IMR-90 (cell line): ENCODE measurements at regions of chr3 and their contacts with region 1.

Region 1: GRCh38 chr3:196739671-196740480 is at the start of gene PAK2:
- DNase-seq: peak; percentile 79
- ATAC-seq: peak; percentile 96
- H3K4me3 ChIP-seq: peak within 1 kb of the TSS; percentile 86
- H3K27ac ChIP-seq: peak within 1 kb of the TSS; percentile 91
- H3K4me1 ChIP-seq: peaks cover 1% of the 10 kb centered on the region; the same call in 1 of the 2 replicates
- H3K27me3 ChIP-seq: no peaks in the 10 kb centered on the region
- CTCF ChIP-seq: no peak
- POLR2A ChIP-seq: peak; percentile 73
- RAD21 ChIP-seq: no peak
- total RNA-seq, gene PAK2: 33.9 and 36.0 TPM in 2 replicates

Region 2: DNA sequence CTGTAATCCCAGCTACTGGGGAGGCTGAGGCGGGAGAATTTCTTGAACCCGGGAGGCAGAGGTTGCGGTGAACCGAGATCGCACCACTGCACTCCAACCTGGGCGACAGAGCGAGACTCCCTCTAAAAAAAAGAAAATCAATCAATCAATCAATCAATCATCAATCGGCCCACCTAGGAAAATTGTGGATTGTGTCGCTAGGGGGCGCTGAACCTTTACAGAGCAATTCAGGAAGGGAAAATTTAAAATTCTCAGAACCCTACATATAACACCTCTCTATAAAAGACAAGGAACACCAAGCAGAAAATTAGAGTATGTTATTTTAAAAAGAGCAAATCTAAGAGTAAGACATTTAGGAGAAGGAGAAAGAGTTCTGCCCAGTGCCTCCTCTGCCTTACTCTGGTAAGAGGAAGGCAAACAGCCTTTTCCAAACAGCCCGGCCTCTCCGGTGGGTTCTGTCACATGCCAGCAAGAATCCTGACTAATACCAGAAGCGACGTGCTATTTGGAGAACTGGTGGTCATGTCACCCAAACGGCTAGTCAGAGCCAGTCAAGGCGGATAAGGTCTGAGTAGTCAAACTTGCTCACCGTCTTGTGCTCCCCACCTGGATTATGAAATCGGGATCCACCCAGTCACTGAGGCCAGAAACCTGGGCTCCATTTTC is 202.4 kb before region 1 on chr3:
- CTCF ChIA-PET with region 1: no interaction called
- POLR2A ChIA-PET with region 1: no interaction called
- dilution Hi-C with region 1: no loop called
- in situ Hi-C with region 1: no loop called
- intact Hi-C with region 1: no loop called
- DNase-seq: peak; percentile 13
- ATAC-seq: no peak
- H3K4me3 ChIP-seq: no peak overlapping the region
- H3K27ac ChIP-seq: no peak overlapping the region
- H3K4me1 ChIP-seq: no peaks in the 10 kb centered on the region
- H3K27me3 ChIP-seq: no peaks in the 10 kb centered on the region; the same call in 1 of the 2 replicates
- CTCF ChIP-seq: peak; percentile 55
- POLR2A ChIP-seq: no peak
- RAD21 ChIP-seq: peak; percentile 35

Region 3: GRCh38 chr3:196650740-196651311 is 89.0 kb before region 1 on chr3:
- CTCF ChIA-PET with region 1: no interaction called
- POLR2A ChIA-PET with region 1: no interaction called
- dilution Hi-C with region 1: no loop called
- in situ Hi-C with region 1: no loop called
- intact Hi-C with region 1: no loop called
- DNase-seq: peak; percentile 98
- ATAC-seq: peak; percentile 99
- H3K4me3 ChIP-seq: no peak overlapping the region
- H3K27ac ChIP-seq: no peak overlapping the region
- H3K4me1 ChIP-seq: peaks cover 2% of the 10 kb centered on the region
- H3K27me3 ChIP-seq: peaks cover 4% of the 10 kb centered on the region; the same call in 1 of the 2 replicates
- CTCF ChIP-seq: no peak
- POLR2A ChIP-seq: no peak
- RAD21 ChIP-seq: no peak

Region 4: GRCh38 chr3:196774191-196774820 is 34.4 kb after region 1 on chr3:
- CTCF ChIA-PET with region 1: no interaction called
- POLR2A ChIA-PET with region 1: no interaction called
- dilution Hi-C with region 1: no loop called
- in situ Hi-C with region 1: no loop called
- intact Hi-C with region 1: loop called (anchors 5 kb)
- DNase-seq: no peak
- ATAC-seq: no peak
- H3K4me3 ChIP-seq: no peak overlapping the region
- H3K27ac ChIP-seq: no peak overlapping the region
- H3K4me1 ChIP-seq: peaks cover 7% of the 10 kb centered on the region
- H3K27me3 ChIP-seq: no peaks in the 10 kb centered on the region
- CTCF ChIP-seq: no peak
- POLR2A ChIP-seq: no peak
- RAD21 ChIP-seq: no peak

Region 5: DNA sequence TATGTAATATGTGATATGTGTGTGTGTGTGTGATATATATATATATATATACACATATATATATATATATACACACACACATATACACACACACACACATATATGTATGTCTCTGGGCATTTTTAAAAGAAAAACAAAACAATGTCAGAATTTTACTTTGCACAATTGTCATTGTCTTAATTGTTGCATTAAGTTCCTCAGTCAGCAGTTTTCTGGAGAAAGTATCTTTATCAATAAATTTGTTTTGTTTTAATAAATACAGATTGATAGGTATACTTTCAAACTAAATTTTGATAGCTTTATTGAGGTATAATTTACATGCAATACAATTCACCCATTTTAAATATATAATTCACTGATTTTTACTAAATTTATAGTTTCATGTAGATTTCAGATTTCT is 64.9 kb after region 1 on chr3:
- CTCF ChIA-PET with region 1: no interaction called
- POLR2A ChIA-PET with region 1: no interaction called
- dilution Hi-C with region 1: no loop called
- in situ Hi-C with region 1: no loop called
- intact Hi-C with region 1: loop called (anchors 5 kb)
- DNase-seq: no peak
- ATAC-seq: no peak
- H3K4me3 ChIP-seq: no peak overlapping the region
- H3K27ac ChIP-seq: no peak overlapping the region
- H3K4me1 ChIP-seq: 0 out of 2 replicates have a peak, but pooled peaks cover 1% of the 10 kb centered on the region
- H3K27me3 ChIP-seq: no peaks in the 10 kb centered on the region
- CTCF ChIP-seq: no peak
- POLR2A ChIP-seq: no peak
- RAD21 ChIP-seq: no peak